Natural killer cell (primary cell): ENCODE measurements at regions of chr9 and their contacts with region 1.

Region 1: DNA sequence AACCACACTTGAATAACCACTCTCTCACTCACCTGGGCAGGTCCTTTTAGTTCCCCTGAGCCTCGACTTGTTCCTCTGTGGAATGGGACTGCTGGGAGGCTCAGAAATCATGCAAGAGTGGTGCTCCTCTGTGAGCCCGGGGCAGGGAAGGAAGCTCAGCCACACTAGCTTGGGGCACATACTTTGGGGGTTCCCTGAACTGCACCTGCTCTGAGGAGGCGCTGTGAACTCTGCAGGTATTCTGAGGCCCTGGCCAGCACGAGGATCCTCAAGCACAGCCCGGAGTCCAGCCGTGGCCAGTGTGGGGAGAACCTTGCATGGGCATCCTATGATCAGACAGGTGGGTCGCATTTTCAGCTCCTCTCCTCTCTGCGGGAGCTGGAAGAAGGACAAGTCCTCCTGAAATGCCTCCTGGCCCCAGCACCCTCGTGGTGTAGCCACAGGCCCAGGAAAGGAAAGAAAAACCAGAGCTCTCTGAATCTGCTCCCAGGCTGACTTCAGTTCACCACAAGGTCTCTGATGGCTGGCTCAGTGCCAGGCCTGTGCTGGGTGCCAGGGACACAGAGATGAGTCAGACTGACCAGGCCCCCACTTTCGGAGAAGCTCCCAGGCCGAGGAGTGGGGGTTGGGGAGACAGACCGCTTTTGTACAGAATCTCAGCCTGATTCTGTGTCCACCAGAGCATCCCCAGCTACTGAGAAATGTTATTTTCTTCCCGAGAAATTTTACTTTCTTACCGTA is 11.9 kb downstream of the GLIPR2 start:
- DNase-seq: peak; percentile 72 to 85
- ATAC-seq: peak in 2 of 3 donors; percentile 19 to 21
- H3K4me3 ChIP-seq: no peak overlapping the region
- H3K4me3 Mint-ChIP-seq: peak overlapping the region; percentile 40
- H3K27ac ChIP-seq: peak overlapping the region; percentile 30
- H3K27ac Mint-ChIP-seq: peak overlapping the region; percentile 41 to 66
- H3K4me1 ChIP-seq: peaks cover 99% of the 10 kb centered on the region
- H3K4me1 Mint-ChIP-seq: peaks cover 69 to 82% of the 10 kb centered on the region in 2 donors
- H3K27me3 ChIP-seq: no peaks in the 10 kb centered on the region
- H3K27me3 Mint-ChIP-seq: no peaks in the 10 kb centered on the region
- CTCF ChIP-seq: no peak

Region 2: DNA sequence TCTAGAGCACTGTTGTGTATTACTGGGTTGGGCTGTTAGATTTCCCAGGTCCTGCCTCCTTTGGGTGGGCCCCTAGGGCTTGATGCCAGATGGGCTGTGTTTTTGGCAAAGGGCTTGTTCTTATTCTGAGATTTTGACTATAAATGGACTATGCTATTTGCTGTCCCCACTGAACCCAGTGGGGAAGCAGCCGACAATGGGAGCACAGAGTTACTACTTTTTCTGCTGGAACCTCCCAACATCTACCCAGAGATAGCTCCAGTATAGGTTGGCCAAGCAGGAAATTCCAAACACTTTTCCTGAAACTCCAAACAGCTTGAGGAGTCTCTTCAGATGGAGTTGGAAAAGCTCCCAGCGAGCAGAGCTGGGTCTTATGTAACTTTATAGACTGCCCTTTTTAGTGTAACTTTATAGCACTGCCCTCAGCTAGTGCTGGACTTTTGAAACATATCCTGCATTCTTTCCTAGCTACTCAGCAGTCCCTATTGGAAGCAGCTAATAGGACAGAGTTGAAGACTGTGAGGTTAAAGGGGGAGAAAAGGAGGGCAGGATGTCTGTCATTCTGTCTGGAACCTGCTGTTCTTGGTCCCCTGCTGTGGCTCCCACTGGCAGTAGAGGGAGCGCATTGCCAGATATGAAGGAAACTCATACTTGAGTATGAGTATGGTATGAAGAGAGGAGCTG is 637.6 kb before region 1 on chr9:
- intact Hi-C with region 1: no loop called
- DNase-seq: no peak
- ATAC-seq: no peak
- H3K4me3 ChIP-seq: no peak overlapping the region
- H3K4me3 Mint-ChIP-seq: no peak overlapping the region
- H3K27ac ChIP-seq: no peak overlapping the region
- H3K27ac Mint-ChIP-seq: no peak overlapping the region
- H3K4me1 ChIP-seq: no peaks in the 10 kb centered on the region
- H3K4me1 Mint-ChIP-seq: peaks cover 5 to 6% of the 10 kb centered on the region in 2 donors
- H3K27me3 ChIP-seq: no peaks in the 10 kb centered on the region
- H3K27me3 Mint-ChIP-seq: peaks cover 0 to 8% of the 10 kb centered on the region in 2 donors
- CTCF ChIP-seq: no peak

Region 3: DNA sequence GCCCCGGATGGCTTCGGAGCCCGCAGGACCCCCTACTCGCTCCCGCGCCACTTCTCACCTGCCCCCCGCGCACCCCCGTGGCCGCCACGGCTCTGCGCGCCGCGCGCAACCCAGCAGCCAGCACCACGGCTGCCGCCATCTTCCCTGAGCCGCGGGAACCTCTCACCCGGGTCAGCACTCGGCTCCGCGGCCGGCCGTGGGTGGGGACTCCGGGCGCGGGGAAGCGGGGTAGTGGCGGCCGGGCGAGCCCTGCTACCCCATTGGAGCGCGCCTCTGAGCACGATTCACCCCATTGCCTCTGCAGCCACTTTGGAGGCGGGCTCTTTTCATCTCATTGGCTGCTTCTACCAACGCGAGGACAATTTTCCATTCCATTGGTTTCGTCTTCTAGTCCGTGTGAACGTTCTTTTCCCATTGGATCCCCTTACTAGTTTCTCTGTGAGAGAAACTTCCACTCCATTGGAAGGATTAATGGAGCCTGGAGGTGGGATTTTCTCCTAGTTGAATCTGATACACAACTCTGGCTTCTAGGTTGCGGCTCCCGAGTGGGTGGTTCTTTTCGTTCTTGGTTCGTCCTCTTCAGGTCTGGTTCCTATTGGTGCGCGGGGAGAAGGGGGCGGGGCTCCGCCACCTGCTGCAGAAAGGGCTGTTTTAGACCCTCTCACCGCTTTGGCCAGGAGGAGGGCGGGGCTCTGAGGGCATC is 333.5 kb before region 1 on chr9 and contains the start of gene HINT2:
- intact Hi-C with region 1: loop called (anchors 10 kb)
- DNase-seq: peak; percentile 96 to 98
- ATAC-seq: peak; percentile 78 to 91 (median 79)
- H3K4me3 ChIP-seq: peak within 1 kb of the TSS; percentile 73
- H3K4me3 Mint-ChIP-seq: peak within 1 kb of the TSS; percentile 98
- H3K27ac ChIP-seq: peak within 1 kb of the TSS; percentile 87
- H3K27ac Mint-ChIP-seq: peak within 1 kb of the TSS; percentile 96 to 98
- H3K4me1 ChIP-seq: peaks cover 38% of the 10 kb centered on the region
- H3K4me1 Mint-ChIP-seq: peaks cover 43 to 53% of the 10 kb centered on the region in 2 donors
- H3K27me3 ChIP-seq: no peaks in the 10 kb centered on the region
- H3K27me3 Mint-ChIP-seq: no peaks in the 10 kb centered on the region
- CTCF ChIP-seq: no peak
- total RNA-seq, gene HINT2: 25.8 to 27.5 (median 25.9) TPM

Region 4: DNA sequence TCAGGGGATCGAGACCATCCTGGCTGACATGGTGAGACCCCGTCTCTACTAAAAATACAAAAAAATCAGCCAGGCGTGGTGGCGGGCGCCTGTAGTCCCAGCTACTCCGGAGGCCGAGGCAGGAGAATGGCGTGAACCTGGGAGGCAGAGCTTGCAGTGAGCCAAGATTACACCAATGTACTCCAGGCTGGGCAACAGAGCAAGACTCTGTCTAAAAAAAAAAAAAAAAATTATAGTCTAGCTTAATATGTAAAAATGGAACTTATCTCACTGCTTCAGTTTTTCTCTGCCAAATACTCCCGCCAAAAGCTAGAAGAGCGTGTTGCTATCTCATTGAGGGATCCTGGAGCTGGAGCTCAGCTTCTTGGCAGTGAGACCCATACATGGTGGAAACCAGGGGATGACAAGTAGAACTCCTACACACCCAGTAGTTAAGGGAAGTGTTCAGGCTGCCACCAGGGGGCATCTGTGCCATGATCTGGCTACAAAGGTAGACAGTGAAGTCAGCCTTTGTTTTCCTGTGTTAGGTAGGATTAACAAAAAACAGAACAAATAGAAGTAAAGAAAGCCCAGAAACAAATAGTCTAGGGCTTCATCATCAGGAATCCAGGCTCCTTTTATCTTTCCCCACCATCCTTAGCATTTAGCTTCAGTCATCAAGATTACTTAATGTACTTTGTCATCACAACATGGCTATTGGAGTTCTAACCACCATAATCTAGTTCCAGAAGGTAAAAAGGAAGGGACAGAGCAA is 45.6 kb before region 1 on chr9:
- intact Hi-C with region 1: loop called (anchors 5 kb)
- DNase-seq: peak; percentile 77 to 93
- ATAC-seq: peak; percentile 96 to 100 (median 100)
- H3K4me3 ChIP-seq: no peak overlapping the region
- H3K4me3 Mint-ChIP-seq: no peak overlapping the region
- H3K27ac ChIP-seq: no peak overlapping the region
- H3K27ac Mint-ChIP-seq: peak overlapping the region in 1 of 2 donors; percentile 48
- H3K4me1 ChIP-seq: no peaks in the 10 kb centered on the region
- H3K4me1 Mint-ChIP-seq: peaks cover 8 to 9% of the 10 kb centered on the region in 2 donors
- H3K27me3 ChIP-seq: no peaks in the 10 kb centered on the region
- H3K27me3 Mint-ChIP-seq: no peaks in the 10 kb centered on the region
- CTCF ChIP-seq: peak; percentile 88

Region 5: GRCh38 chr9:36136272-36136893 is 12.1 kb before region 1 on chr9 and contains the start of gene GLIPR2:
- intact Hi-C with region 1: loop called (anchors 1 kb)
- DNase-seq: peak; percentile 81 to 87
- ATAC-seq: peak; percentile 93 to 98 (median 96)
- H3K4me3 ChIP-seq: peak within 1 kb of the TSS; percentile 70
- H3K4me3 Mint-ChIP-seq: peak within 1 kb of the TSS; percentile 96
- H3K27ac ChIP-seq: peak within 1 kb of the TSS; percentile 77
- H3K27ac Mint-ChIP-seq: peak within 1 kb of the TSS; percentile 93 to 100
- H3K4me1 ChIP-seq: peaks cover 57% of the 10 kb centered on the region
- H3K4me1 Mint-ChIP-seq: peaks cover 45 to 52% of the 10 kb centered on the region in 2 donors
- H3K27me3 ChIP-seq: no peaks in the 10 kb centered on the region
- H3K27me3 Mint-ChIP-seq: no peaks in the 10 kb centered on the region
- CTCF ChIP-seq: no peak
- total RNA-seq, gene GLIPR2: 124 to 135 (median 125) TPM

Region 6: DNA sequence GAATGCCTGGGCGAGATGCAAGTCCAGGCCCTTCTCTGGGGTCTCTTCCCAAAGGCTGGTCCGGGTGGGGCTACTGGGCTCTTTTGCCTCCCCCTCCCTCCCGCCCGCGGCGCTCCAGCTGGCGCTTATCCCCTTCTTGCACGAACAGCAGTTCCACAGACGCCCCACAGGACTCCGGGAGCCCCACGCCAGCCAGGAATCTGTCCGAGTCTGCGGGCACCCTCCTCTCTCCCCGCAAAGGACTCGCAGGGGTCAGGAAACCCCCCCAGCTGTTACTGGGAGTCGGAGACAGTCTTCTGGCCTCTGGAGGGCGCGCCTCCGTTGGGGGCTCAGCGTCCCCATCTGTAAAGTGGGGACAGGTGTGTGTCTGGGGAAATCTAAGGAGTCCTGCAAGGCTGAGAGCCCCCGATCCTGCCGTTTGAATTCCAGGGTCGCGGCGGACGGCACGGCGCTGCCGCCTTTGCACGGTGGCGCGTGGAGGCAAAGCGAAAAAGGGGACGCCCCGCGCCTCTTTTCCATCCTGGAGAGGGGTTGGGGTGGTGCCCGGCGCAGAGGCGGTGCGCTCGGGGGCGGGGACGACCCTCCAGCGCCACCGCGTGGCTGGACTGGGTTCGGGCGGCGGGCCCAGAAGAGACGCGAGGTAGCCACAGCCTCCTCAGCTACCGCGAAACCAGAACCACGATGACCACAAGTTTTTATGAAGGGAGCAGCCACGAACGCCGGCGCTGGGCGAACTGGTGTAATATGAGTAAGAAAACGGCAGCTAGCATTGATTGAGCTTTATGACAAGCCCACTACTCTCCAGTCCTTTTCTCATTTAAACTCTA is 17.8 kb after region 1 on chr9:
- intact Hi-C with region 1: loop called (anchors 1 kb)
- DNase-seq: peak; percentile 88 to 89
- ATAC-seq: peak; percentile 96 to 99 (median 96)
- H3K4me3 ChIP-seq: peak overlapping the region; percentile 18
- H3K4me3 Mint-ChIP-seq: peak overlapping the region; percentile 72
- H3K27ac ChIP-seq: no peak overlapping the region
- H3K27ac Mint-ChIP-seq: peak overlapping the region; percentile 50 to 74
- H3K4me1 ChIP-seq: peaks cover 16% of the 10 kb centered on the region
- H3K4me1 Mint-ChIP-seq: peaks cover 4 to 22% of the 10 kb centered on the region in 2 donors
- H3K27me3 ChIP-seq: no peaks in the 10 kb centered on the region
- H3K27me3 Mint-ChIP-seq: peaks cover 0 to 6% of the 10 kb centered on the region in 2 donors
- CTCF ChIP-seq: peak; percentile 98

Region 7: DNA sequence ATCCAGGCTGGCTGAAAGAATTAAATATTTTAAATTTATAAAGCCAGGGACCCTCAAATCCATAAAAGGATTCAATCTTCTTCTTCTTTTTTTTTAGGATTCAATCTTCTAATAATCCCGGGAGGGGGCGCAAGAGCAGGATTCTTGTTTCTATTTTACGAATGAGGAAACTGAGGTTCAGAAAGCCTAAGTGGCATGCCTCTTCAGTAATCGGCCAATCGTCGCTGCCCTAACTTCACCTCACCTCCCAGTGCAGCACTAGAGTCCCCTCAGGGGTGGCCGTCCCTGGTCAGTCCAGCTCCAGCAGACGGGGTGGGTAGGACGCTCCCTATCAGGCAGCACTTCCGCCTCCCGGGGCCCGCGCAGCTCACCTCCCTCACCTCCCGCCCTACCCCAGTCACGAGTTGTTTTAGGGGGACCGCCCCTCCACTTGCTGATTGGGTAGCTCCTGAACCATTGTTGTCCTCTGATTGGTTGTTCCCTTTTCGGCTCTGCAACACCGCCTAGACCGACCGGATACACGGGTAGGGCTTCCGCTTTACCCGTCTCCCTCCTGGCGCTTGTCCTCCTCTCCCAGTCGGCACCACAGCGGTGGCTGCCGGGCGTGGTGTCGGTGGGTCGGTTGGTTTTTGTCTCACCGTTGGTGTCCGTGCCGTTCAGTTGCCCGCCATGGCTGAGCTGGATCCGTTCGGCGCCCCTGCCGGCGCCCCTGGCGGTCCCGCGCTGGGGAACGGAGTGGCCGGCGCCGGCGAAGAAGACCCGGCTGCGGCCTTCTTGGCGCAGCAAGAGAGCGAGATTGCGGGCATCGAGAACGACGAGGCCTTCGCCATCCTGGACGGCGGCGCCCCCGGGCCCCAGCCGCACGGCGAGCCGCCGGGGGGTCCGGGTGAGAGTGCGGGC is 42.2 kb after region 1 on chr9 and contains the start of gene CLTA:
- intact Hi-C with region 1: loop called (anchors 1 kb)
- DNase-seq: peak; percentile 88 to 98
- ATAC-seq: peak; percentile 93 to 98 (median 97)
- H3K4me3 ChIP-seq: peak within 1 kb of the TSS; percentile 85
- H3K4me3 Mint-ChIP-seq: peak within 1 kb of the TSS; percentile 98
- H3K27ac ChIP-seq: peak within 1 kb of the TSS; percentile 88
- H3K27ac Mint-ChIP-seq: peak within 1 kb of the TSS; percentile 84 to 91
- H3K4me1 ChIP-seq: peaks cover 35% of the 10 kb centered on the region
- H3K4me1 Mint-ChIP-seq: peaks cover 62 to 74% of the 10 kb centered on the region in 2 donors
- H3K27me3 ChIP-seq: no peaks in the 10 kb centered on the region
- H3K27me3 Mint-ChIP-seq: no peaks in the 10 kb centered on the region
- CTCF ChIP-seq: peak; percentile 44
- total RNA-seq, gene CLTA: 49.4 to 62.0 (median 52.6) TPM

Region 8: DNA sequence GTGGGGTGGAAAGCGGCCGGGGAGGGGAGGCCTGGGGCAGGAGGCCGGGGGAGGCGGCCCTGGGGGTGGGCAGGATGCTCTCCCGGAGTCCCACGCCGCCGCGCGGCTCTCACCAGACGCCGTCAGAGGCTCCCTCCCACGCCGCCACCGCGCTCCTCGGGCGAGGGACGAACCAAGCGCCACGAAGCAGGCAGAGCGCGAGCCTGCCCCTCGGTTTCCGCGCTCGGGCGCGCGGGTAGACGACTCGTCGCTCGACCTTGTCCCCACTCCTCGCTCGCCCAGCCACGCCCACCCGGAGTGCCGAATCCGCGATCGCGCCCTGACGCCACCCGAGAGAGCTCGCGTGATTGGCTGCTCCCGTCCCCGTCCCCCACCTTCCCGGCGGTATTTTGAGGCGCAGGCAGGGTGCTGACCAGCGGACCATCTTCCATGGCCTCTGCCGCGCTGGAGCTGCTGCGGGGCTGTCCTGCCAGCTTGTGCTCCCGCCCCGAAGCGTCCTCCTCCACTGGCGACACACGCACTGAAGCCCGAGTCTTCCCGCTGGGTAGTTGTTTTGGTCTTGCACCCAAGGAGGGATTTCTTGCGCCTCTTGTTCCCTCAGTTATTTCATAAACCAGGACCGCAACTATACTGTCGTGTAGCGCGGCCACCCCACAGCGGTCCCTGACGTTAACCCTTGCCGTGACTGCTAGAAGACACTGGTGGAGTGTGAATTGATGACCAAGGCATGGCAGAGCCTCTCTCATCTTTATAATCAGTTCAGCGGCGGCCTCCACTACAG is 109.9 kb after region 1 on chr9 and contains the start of gene GNE:
- intact Hi-C with region 1: no loop called
- DNase-seq: peak; percentile 97
- ATAC-seq: peak; percentile 89 to 97 (median 91)
- H3K4me3 ChIP-seq: peak within 1 kb of the TSS; percentile 69
- H3K4me3 Mint-ChIP-seq: peak within 1 kb of the TSS; percentile 95
- H3K27ac ChIP-seq: peak within 1 kb of the TSS; percentile 82
- H3K27ac Mint-ChIP-seq: peak within 1 kb of the TSS; percentile 91 to 95
- H3K4me1 ChIP-seq: peaks cover 15% of the 10 kb centered on the region
- H3K4me1 Mint-ChIP-seq: peaks cover 6 to 15% of the 10 kb centered on the region in 2 donors
- H3K27me3 ChIP-seq: no peaks in the 10 kb centered on the region
- H3K27me3 Mint-ChIP-seq: no peaks in the 10 kb centered on the region
- CTCF ChIP-seq: no peak
- total RNA-seq, gene GNE: 10.6 to 12.4 (median 11.3) TPM